Activated B cell treated with CpG ODN at 0.5 μM for 24 hours (primary cell): ENCODE measurements at regions of chr1 and their contacts with region 1.

Region 1: DNA sequence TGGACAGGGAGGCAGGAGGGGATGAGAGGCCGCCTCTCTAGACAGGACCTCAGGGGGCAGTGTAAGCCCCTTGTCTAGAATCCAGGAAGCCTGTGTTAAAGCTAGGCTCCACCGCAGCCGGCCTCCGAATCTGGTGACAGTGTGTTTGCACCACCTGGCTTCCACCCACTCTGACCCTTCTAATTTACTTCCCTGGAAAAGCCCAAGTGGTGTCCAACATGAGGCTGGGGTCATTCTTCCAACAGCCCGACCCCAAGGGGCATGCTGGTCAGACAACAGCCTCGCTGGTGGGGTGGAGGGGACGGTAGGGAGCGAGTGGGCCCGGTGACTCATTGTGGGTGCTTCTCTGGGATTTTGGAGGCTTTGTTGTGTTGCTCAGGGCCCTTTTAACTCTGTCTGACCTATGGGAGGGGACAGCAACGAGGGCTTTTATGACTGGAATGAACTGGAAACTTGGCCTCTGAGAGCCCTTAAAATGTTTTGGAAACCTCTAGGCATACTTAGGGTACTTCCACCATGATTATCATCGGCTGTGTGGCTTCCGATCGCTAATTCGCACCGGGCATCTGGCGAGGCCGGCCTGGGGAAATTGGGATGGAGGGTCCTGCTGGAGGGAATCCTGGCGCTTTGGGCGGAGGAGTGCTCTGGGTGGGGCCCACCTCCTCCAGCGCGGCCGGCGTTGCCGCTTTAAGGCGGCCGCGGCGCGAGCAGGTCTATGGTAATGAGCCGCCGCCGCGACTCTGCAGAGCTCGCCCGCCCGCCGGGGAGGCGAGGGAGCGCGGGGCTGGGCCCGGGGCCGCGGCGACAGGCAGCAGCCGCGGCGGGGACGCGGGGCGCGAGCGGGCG is at the start of gene CELSR2:
- DNase-seq: peak; percentile 54
- ATAC-seq: peak; percentile 89
- H3K4me3 Mint-ChIP-seq: peak within 1 kb of the TSS; percentile 71
- H3K27ac Mint-ChIP-seq: no peak within 1 kb of the TSS
- H3K4me1 Mint-ChIP-seq: peaks cover 12% of the 10 kb centered on the region
- H3K27me3 Mint-ChIP-seq: peaks cover 23% of the 10 kb centered on the region
- CTCF ChIP-seq: no peak
- total RNA-seq, gene CELSR2: 0.81 and 1.1 TPM in 2 replicates

Region 2: DNA sequence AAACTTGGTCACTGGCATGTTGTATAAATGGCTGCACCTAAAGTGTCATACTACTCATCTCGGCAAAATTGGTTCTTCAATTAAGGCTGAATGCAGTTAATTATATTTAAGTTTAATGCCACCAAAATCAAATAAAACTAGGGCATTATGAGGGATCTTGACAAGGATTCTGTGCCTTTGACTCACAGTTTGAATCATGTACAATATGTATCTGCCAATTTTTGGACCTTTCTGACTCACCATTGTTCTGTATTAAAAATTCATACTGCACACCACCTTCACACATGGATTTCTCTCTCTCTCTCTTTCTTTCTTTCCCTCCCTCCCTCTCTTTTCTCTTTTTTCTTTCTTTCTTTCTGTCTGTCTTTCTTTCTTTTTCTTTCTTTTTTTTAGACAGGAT is 516.6 kb before region 1 on chr1:
- CTCF ChIA-PET with region 1: no interaction called
- POLR2A ChIA-PET with region 1: no interaction called
- intact Hi-C with region 1: no loop called
- DNase-seq: no peak
- ATAC-seq: no peak
- H3K4me3 Mint-ChIP-seq: no peak overlapping the region
- H3K27ac Mint-ChIP-seq: no peak overlapping the region
- H3K4me1 Mint-ChIP-seq: no peaks in the 10 kb centered on the region
- H3K27me3 Mint-ChIP-seq: peaks cover 25% of the 10 kb centered on the region
- CTCF ChIP-seq: no peak

Region 3: DNA sequence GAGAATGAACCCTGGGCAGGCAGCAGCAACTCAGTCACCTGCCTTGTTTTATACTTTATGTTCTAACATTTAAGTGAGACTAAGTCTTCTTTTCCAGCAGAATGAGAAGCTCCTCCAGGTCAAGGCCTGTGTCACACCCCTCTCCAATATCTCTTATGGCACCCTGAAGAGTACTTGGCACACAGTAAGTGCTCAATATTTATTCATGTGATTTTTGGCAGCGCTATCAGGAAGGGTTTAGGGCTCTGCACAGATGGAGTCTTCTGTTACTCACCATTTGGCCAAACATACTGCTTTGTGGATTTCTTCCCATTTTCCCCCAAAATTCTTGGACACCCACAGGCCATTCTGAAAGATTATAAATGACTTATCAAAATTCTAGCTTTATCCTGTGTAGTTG is 101.6 kb after region 1 on chr1:
- CTCF ChIA-PET with region 1: no interaction called
- POLR2A ChIA-PET with region 1: no interaction called
- intact Hi-C with region 1: no loop called
- DNase-seq: no peak
- ATAC-seq: no peak
- H3K4me3 Mint-ChIP-seq: no peak overlapping the region
- H3K27ac Mint-ChIP-seq: no peak overlapping the region
- H3K4me1 Mint-ChIP-seq: no peaks in the 10 kb centered on the region
- H3K27me3 Mint-ChIP-seq: peaks cover 8% of the 10 kb centered on the region
- CTCF ChIP-seq: no peak

Region 4: GRCh38 chr1:109483672-109484518 is 234.9 kb after region 1 on chr1 and contains the start of gene ATXN7L2:
- CTCF ChIA-PET with region 1: no interaction called
- POLR2A ChIA-PET with region 1: interaction called, 5 read pairs
- intact Hi-C with region 1: loop called (anchors 1 kb)
- DNase-seq: peak; percentile 90
- ATAC-seq: peak; percentile 79
- H3K4me3 Mint-ChIP-seq: peak within 1 kb of the TSS; percentile 94
- H3K27ac Mint-ChIP-seq: peak within 1 kb of the TSS; percentile 91
- H3K4me1 Mint-ChIP-seq: peaks cover 27% of the 10 kb centered on the region
- H3K27me3 Mint-ChIP-seq: peaks cover 16% of the 10 kb centered on the region
- CTCF ChIP-seq: no peak
- total RNA-seq, gene ATXN7L2: 7.5 and 9.0 TPM in 2 replicates